Activated T-helper 1 cell treated with anti-CD3 and anti-CD28 coated beads, Interleukin-12 subunit alpha, Interleukin-12 subunit beta, Interleukin-2, Interleukin-4 antibody, amounts not matched to agents 30 ng/mL and 10 ng/mL and 1 ng/mL, durations not matched to agents 14 hours and 24 hours and 36 hours (primary cell): ENCODE measurements at regions of chr7 and their contacts with region 1.

Region 1: GRCh38 chr7:128455551-128456254 is at the start of gene HILPDA:
- DNase-seq: peak; percentile 95
- H3K4me3 Mint-ChIP-seq: peak within 1 kb of the TSS; percentile 96
- H3K27ac Mint-ChIP-seq: peak within 1 kb of the TSS; percentile 99
- H3K4me1 Mint-ChIP-seq: peaks cover 67% of the 10 kb centered on the region
- H3K27me3 Mint-ChIP-seq: peaks cover 16% of the 10 kb centered on the region
- total RNA-seq, gene HILPDA: 53.7 and 56.9 TPM in 2 replicates

Region 2: DNA sequence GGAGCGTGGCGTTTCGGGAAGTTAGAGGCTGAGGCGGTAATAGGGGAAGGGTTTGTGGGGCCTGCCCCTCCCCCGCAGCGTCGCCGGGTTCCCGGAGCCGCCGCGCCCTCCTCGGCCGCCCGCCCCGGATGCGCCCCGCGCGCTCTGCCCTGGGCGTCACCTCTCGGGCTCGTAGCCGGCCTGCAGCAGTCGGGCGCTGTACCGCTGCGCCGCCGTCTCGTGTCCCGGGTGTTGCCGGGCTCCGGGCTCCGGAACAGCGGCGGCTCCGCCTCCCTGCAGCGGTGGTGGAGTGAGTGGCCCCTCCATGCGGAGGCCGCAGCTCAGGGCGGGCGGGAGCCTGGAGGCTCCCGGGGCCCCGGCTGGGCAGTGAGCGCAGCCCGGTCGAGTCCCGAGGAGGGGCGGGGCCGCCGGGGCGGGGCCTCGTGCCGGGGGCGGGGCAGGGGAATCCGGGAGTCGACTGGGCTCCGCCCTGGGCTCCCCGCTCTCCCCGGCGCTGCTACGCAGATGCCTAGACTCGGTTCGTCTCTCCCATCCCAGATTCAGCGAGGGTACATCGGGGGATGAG is 46.0 kb before region 1 on chr7 and contains the start of gene IMPDH1:
- intact Hi-C with region 1: loop called (anchors 1 kb)
- DNase-seq: peak; percentile 82
- H3K4me3 Mint-ChIP-seq: peak within 1 kb of the TSS; percentile 93
- H3K27ac Mint-ChIP-seq: peak within 1 kb of the TSS; percentile 80
- H3K4me1 Mint-ChIP-seq: peaks cover 36% of the 10 kb centered on the region
- H3K27me3 Mint-ChIP-seq: peaks cover 25% of the 10 kb centered on the region
- total RNA-seq, gene IMPDH1: 91.7 and 95.8 TPM in 2 replicates

Region 3: DNA sequence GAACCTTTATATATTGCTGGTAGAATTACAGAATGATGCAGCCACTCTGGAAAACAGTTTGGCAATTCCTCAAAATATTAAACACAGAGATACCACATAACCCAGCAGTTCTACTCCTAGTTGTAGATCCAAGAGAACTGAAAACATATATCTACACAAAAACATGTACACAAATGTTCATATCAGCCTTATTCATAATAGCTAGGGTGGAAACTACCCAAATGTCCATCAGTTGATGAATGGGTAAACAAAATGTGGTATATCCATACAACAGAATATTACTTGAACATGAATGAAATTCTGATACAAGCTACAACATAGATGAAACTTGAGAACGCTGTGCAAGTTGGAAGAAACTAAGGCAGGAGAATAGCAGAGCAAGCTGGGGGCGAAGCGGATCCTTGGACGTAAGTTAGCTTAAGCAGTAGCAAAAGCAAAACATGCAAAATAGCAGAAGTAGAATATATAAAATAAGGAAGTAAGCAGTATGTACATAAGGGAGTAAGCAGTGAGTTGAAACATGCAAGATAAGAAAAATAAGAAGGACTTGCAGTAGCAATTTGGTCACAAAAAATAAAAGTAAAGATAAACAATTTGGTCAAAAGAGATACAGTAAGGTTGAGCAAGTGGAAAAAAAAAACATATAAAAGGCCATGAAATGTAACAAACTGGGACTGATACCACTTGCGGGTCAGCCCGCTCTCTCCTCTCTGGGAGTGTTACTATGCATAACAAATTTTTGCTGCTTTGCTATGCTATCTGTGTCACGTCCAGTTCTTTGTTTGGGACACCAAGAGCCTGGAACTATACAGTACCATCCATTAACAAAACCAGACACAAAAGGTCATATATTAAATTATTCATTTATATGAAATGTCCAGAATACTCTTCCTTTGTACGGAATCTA is 18.0 kb before region 1 on chr7:
- intact Hi-C with region 1: no loop called
- DNase-seq: no peak
- H3K4me3 Mint-ChIP-seq: no peak overlapping the region
- H3K27ac Mint-ChIP-seq: no peak overlapping the region
- H3K4me1 Mint-ChIP-seq: no peaks in the 10 kb centered on the region
- H3K27me3 Mint-ChIP-seq: peaks cover 11% of the 10 kb centered on the region

Region 4: DNA sequence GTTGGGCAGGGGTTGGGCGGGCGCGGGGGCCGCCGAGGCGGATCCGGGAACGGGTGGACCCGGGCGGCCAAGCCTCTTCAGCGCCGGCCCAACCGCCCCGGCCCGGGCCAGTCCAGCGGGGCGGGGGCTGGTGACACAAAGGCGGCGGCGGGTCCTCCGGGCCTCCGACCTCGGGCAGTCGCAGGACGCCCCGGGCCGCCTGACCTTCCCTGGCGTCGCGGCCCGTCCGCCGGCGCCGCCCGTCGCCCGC is 75.1 kb after region 1 on chr7:
- intact Hi-C with region 1: loop called (anchors 1 kb)
- DNase-seq: no peak
- H3K4me3 Mint-ChIP-seq: no peak overlapping the region
- H3K27ac Mint-ChIP-seq: no peak overlapping the region
- H3K4me1 Mint-ChIP-seq: peaks cover 40% of the 10 kb centered on the region
- H3K27me3 Mint-ChIP-seq: no peaks in the 10 kb centered on the region

Region 5: GRCh38 chr7:129122751-129123509 is 667.2 kb after region 1 on chr7:
- intact Hi-C with region 1: loop called (anchors 5 kb)
- DNase-seq: peak; percentile 14
- H3K4me3 Mint-ChIP-seq: peak overlapping the region; percentile 22
- H3K27ac Mint-ChIP-seq: peak overlapping the region; percentile 85
- H3K4me1 Mint-ChIP-seq: peaks cover 39% of the 10 kb centered on the region
- H3K27me3 Mint-ChIP-seq: peaks cover 15% of the 10 kb centered on the region